ENCODE measurements at regions of chr15 and their contacts with region 1.

Region 1: GRCh38 chr15:98177924-98178592 is 217.6 kb downstream of the ARRDC4 start:
- DNase-seq: peak; percentile 39
- ATAC-seq: peak; percentile 98
- H3K4me3 ChIP-seq: no peak overlapping the region
- H3K27ac ChIP-seq: no peak overlapping the region
- H3K4me1 ChIP-seq: no peaks in the 10 kb centered on the region
- H3K27me3 ChIP-seq: peaks cover 11% of the 10 kb centered on the region
- CTCF ChIP-seq: peak; percentile 80

Region 2: DNA sequence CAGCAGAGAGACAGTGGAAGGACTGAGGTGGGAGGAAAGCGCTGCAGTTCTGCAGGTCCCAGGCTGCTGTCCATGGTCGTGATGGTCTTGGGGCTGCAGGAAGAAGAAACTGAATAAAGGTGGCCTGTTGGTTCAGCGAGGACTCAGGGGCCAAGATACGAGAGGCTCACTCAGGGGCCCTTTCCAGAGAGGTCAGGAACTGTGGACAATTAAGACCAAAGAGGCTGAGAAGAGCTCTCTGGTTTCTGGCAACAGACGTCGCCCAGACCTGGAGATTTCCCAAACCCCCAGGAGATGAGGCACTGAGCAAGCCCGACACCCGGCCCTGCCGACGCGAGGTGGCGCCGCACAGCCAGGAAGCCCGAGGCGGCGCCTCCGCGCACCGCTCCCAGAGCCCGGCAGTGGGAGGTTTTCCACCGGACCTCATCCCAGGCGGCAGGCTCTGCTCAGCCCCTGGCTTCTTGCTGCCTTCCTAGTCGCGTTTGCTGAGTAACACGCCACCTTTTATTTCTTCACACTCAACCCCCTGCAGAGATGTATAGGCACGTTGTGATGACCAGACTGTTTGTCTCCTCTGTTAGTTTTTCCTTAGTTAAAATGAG is 274.0 kb before region 1 on chr15:
- CTCF ChIA-PET with region 1: interaction called, 18 read pairs
- POLR2A ChIA-PET with region 1: no interaction called
- in situ Hi-C with region 1: no loop called
- intact Hi-C with region 1: loop called (anchors 5 kb)
- DNase-seq: no peak
- ATAC-seq: peak; percentile 97
- H3K4me3 ChIP-seq: no peak overlapping the region
- H3K27ac ChIP-seq: no peak overlapping the region
- H3K4me1 ChIP-seq: no peaks in the 10 kb centered on the region
- H3K27me3 ChIP-seq: peaks cover 22% of the 10 kb centered on the region
- CTCF ChIP-seq: peak; percentile 89

Region 3: GRCh38 chr15:97909291-97909891 is 268.7 kb before region 1 on chr15:
- CTCF ChIA-PET with region 1: no interaction called
- POLR2A ChIA-PET with region 1: no interaction called
- in situ Hi-C with region 1: no loop called
- intact Hi-C with region 1: loop called (anchors 5 kb)
- DNase-seq: peak; percentile 39
- ATAC-seq: peak; percentile 99
- H3K4me3 ChIP-seq: no peak overlapping the region
- H3K27ac ChIP-seq: no peak overlapping the region
- H3K4me1 ChIP-seq: no peaks in the 10 kb centered on the region
- H3K27me3 ChIP-seq: peaks cover 13% of the 10 kb centered on the region
- CTCF ChIP-seq: peak; percentile 94

Region 4: GRCh38 chr15:98241030-98241554 is 63.0 kb after region 1 on chr15:
- CTCF ChIA-PET with region 1: no interaction called
- POLR2A ChIA-PET with region 1: no interaction called
- in situ Hi-C with region 1: no loop called
- intact Hi-C with region 1: no loop called
- DNase-seq: no peak
- ATAC-seq: no peak
- H3K4me3 ChIP-seq: no peak overlapping the region
- H3K27ac ChIP-seq: no peak overlapping the region
- H3K4me1 ChIP-seq: no peaks in the 10 kb centered on the region
- H3K27me3 ChIP-seq: no peaks in the 10 kb centered on the region
- CTCF ChIP-seq: no peak